ENCODE measurements at regions of chr7 and their contacts with region 1.

Region 1: GRCh38 chr7:144397086-144397485 is 6.4 kb downstream of the NOBOX start:
- DNase-seq: no peak
- ATAC-seq: no peak

Region 2: DNA sequence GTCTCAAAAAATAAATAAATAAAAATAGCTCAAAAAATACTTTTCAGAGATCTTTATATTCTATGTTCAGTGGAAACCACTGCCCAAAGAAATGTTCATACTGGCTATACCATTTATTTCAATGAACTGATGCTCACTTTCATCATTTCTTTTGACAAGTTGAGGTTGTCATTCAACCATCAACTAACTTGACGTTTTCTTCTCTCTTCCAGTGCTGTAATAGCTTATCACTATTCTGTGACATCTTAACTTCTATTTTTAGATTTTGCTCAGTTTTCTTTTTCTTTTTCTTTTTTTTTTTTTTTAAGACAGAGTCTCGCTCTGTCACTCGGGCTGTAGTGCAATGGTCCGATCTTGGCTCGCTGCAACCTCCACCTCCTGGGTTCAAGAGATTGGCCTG is 222.5 kb before region 1 on chr7:
- intact Hi-C with region 1: loop called in 1 of 2 experiments (anchors 5 kb)
- DNase-seq: no peak
- ATAC-seq: no peak

Region 3: DNA sequence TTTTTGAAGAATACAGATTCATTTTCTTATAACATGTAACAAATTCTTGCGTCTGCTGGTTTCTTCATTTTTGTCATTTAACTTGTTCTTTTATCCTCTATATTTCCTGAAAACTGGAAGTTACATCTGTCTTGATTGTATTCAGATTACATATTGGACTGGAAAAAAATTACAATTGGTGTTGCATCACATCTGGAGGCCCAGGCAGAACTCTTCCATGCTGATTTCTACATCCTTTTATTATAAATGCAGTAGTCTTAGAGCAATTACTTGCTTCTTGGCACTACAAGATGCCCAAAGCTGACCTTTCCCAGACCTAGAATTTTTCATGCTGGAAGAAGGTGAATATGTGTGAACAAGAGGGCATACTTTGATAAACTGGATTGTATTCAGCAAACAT is 1258.6 kb after region 1 on chr7:
- intact Hi-C with region 1: no loop called
- DNase-seq: no peak
- ATAC-seq: no peak